Dorsolateral prefrontal cortex (tissue), 120 donors: ENCODE measurements at regions of chr7 and their contacts with region 1.

Region 1: DNA sequence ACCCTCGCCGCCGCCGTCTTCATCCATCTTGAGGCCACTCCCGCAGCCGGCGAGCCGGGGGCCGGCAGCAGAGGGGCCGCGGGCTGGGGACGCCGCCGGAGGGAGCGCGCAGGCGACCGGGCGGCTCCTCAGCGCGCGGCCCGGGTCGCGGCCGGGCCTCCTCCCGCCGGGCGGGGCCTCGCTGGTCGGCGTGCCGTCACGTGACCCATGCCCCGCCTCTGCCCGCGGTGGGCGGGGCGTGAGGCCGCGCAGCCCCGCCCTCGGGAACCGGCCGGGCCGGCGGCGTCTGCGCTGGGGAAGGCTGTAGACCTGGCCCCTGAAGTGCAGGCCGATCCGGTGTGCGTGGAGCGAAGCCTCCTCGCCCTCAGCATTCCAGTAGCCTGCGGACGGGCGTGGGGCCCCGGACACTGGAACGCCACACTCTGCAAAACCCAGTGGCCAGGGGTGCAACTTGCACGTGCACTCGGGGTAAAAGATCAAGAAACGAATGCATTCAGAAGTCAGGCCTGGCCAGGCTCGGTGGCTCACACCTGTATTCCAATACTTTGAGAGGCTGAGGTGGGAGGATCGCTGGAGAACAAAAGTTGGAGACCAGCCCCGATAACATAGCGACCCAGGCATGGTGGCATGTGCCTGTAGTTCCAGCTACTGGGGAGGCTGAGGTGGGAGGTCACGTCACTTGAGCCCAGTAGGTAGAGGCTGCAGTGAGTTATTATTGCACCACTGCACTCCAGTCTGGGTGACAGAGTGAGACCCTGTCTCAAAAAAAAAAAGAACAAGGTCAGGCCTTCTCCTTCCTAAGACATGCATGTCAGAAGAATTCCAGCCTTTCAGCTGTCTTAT is at the start of gene CYTH3:
- DNase-seq: peak; percentile 65 to 93 (median 78)
- H3K4me3 ChIP-seq: peak within 1 kb of the TSS; percentile 63 to 98 (median 88)
- H3K27ac ChIP-seq: peak within 1 kb of the TSS in 47 of 59 donors; percentile 19 to 87 (median 63)
- H3K27me3 ChIP-seq: no peaks in the 10 kb centered on the region
- CTCF ChIP-seq: peak in 6 of 56 donors; percentile 10 to 19 (median 14)
- total RNA-seq, gene CYTH3: 18.6 to 63.4 (median 41.6) TPM

Region 2: GRCh38 chr7:6172224-6172923 is 100.3 kb before region 1 on chr7:
- intact Hi-C with region 1: loop called in 1 of 2 experiments (anchors 5 kb)
- DNase-seq: no peak
- H3K4me3 ChIP-seq: peak overlapping the region in 28 of 59 donors; percentile 2 to 61 (median 36)
- H3K27ac ChIP-seq: peak overlapping the region in 43 of 59 donors; percentile 1 to 77 (median 55)
- H3K27me3 ChIP-seq: no peaks in the 10 kb centered on the region
- CTCF ChIP-seq: no peak

Region 3: DNA sequence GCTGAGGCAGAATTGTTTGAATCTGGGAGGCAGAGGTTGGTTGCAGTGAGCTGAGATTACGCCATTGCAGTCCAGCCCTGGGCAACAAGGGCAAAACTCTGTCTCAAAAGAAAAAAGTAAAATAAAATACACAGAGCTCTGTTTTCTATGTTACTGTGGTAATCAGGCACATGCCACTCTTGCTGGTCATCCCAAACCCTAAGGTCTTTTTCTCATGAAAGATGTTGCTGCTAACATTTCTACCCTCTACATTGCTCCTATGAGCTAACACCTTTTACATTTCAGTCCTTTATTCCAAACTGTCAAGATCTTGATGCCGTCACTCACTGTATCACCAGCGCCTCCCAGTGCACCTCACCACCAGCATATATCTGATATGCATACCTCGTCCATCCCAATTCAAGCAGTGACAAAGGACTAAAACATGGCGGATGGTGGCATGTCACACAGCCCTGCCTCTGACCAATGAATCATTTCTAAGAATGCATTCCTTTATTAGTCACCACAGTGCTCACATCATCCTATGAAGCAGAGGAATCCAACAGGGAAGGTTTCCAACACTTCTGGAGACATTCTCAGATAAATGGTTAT is 170.7 kb after region 1 on chr7:
- intact Hi-C with region 1: loop called in 1 of 2 experiments (anchors 5 kb)
- DNase-seq: no peak
- H3K4me3 ChIP-seq: peak overlapping the region in 1 of 59 donors; percentile 16
- H3K27ac ChIP-seq: peak overlapping the region in 4 of 59 donors; percentile 21 to 69 (median 44)
- H3K27me3 ChIP-seq: no peaks in the 10 kb centered on the region
- CTCF ChIP-seq: no peak